ENCODE measurements at regions of chr2 and their contacts with region 1.

Region 1: GRCh38 chr2:12587729-12588522 is 128.8 kb upstream of the TRIB2 start:
- DNase-seq: peak; percentile 82
- H3K4me3 ChIP-seq: no peak overlapping the region
- H3K27ac ChIP-seq: peak overlapping the region in 3 of 4 donors; percentile 62 to 65 (median 62)
- H3K4me1 ChIP-seq: peaks cover 0 to 11% (median 7%) of the 10 kb centered on the region in 4 donors
- H3K27me3 ChIP-seq: no peaks in the 10 kb centered on the region
- CTCF ChIP-seq: no peak
- EP300 ChIP-seq: no peak
- POLR2A ChIP-seq: no peak

Region 2: DNA sequence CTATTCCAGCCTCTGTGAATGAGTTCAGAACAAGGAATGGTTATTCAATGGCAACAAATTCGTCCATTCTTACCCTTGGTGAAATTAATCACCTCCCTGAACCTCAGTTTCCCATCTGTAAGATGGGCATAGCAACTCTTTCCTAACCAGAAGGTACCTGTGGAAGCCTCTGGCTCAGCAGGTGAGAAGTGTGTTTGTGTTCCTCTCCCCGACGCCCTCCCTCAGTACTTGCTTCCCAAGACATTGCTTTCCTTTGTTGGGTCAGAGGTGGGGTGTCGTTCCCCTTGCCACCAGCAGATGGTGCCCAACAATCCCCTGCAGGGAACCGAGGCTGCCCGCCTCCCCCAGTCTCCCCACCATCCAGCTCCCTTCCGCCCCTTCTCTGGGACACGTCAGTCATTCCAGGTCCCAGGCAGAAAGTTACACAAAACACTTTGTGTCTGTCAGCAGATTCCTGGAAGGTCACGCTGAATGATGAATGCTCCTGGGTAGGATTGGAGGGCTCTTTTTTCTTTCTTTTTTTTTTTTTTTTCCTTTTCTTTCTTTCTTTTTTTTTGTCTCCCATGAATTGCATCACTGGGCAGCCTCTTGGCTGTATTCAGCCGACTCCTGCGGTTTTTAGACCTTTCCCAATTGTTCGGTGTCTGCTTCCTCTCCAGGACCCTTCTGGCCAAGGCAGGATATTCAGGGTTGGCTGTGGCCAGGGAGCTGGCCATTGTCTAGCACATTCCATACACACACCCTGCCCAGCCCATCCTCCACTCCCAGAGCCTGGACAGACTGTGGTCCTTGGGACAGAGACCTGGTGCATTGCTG is 724.2 kb before region 1 on chr2:
- intact Hi-C with region 1: loop called (anchors 10 kb)
- DNase-seq: peak; percentile 93
- H3K4me3 ChIP-seq: peak overlapping the region in 1 of 4 donors; percentile 15
- H3K27ac ChIP-seq: peak overlapping the region; percentile 7 to 55 (median 42)
- H3K4me1 ChIP-seq: peaks cover 0 to 15% (median 13%) of the 10 kb centered on the region in 4 donors
- H3K27me3 ChIP-seq: no peaks in the 10 kb centered on the region
- CTCF ChIP-seq: peak; percentile 92 to 97 (median 97)
- EP300 ChIP-seq: peak in 1 of 4 donors; percentile 8
- POLR2A ChIP-seq: no peak

Region 3: GRCh38 chr2:12684471-12684936 is 96.6 kb after region 1 on chr2:
- intact Hi-C with region 1: loop called (anchors 2 kb)
- DNase-seq: peak; percentile 71
- H3K4me3 ChIP-seq: peak overlapping the region in 1 of 4 donors; percentile 25
- H3K27ac ChIP-seq: peak overlapping the region; percentile 45 to 85 (median 76)
- H3K4me1 ChIP-seq: peaks cover 0 to 47% (median 37%) of the 10 kb centered on the region in 4 donors
- H3K27me3 ChIP-seq: no peaks in the 10 kb centered on the region
- CTCF ChIP-seq: no peak
- EP300 ChIP-seq: peak in 2 of 4 donors; percentile 60 to 87
- POLR2A ChIP-seq: no peak